ENCODE measurements at regions of chr1 and their contacts with region 1.

Region 1: GRCh38 chr1:109027841-109028240 is 14.1 kb downstream of the WDR47 start:
- DNase-seq: peak; percentile 7 to 39 (median 36)
- H3K4me3 ChIP-seq: no peak overlapping the region
- H3K27ac ChIP-seq: no peak overlapping the region
- H3K4me1 ChIP-seq: peaks cover 0 to 8% (median 3%) of the 10 kb centered on the region in 4 experiments
- H3K27me3 ChIP-seq: no peaks in the 10 kb centered on the region

Region 2: GRCh38 chr1:108913105-108913948 is 114.5 kb before region 1 on chr1:
- CTCF ChIA-PET with region 1: no interaction called
- POLR2A ChIA-PET with region 1: no interaction called
- DNase-seq: peak in 2 of 3 donors; percentile 32 to 40
- H3K4me3 ChIP-seq: no peak overlapping the region
- H3K27ac ChIP-seq: peak overlapping the region in 1 of 2 experiments; percentile 59
- H3K4me1 ChIP-seq: peaks cover 0 to 6% (median 3%) of the 10 kb centered on the region in 4 experiments
- H3K27me3 ChIP-seq: no peaks in the 10 kb centered on the region

Region 3: DNA sequence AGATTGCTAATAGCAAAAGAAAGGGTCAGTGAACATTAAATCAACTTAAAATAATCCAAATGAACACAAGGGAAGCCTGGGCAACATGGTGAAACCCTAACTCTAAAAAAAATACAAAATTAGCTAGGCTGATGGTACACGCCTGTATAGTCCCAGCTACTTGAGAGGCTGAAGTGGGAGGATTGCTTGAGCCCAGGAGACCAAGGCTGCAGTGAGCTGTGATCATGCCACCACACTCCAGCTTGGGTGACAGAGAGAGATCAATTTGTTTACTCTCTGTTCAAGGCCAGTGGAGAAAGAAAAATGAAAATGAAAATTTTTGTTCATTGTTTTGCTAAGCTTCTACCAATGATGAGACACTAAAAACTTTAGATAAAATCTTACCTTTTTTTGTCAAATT is 10.7 kb before region 1 on chr1:
- CTCF ChIA-PET with region 1: interaction called, 15 read pairs
- POLR2A ChIA-PET with region 1: interaction called, 3 read pairs
- DNase-seq: no peak
- H3K4me3 ChIP-seq: no peak overlapping the region
- H3K27ac ChIP-seq: no peak overlapping the region
- H3K4me1 ChIP-seq: no peaks in the 10 kb centered on the region
- H3K27me3 ChIP-seq: no peaks in the 10 kb centered on the region

Region 4: GRCh38 chr1:109041621-109042468 is 14.0 kb after region 1 on chr1 and contains the start of gene WDR47:
- CTCF ChIA-PET with region 1: interaction called, 17 read pairs
- POLR2A ChIA-PET with region 1: interaction called, 3 read pairs
- DNase-seq: peak; percentile 98 to 99 (median 99)
- H3K4me3 ChIP-seq: peak within 1 kb of the TSS; percentile 82 to 97 (median 93)
- H3K27ac ChIP-seq: peak within 1 kb of the TSS; percentile 54 to 83
- H3K4me1 ChIP-seq: peaks cover 5 to 16% (median 12%) of the 10 kb centered on the region in 4 experiments
- H3K27me3 ChIP-seq: no peaks in the 10 kb centered on the region

Region 5: DNA sequence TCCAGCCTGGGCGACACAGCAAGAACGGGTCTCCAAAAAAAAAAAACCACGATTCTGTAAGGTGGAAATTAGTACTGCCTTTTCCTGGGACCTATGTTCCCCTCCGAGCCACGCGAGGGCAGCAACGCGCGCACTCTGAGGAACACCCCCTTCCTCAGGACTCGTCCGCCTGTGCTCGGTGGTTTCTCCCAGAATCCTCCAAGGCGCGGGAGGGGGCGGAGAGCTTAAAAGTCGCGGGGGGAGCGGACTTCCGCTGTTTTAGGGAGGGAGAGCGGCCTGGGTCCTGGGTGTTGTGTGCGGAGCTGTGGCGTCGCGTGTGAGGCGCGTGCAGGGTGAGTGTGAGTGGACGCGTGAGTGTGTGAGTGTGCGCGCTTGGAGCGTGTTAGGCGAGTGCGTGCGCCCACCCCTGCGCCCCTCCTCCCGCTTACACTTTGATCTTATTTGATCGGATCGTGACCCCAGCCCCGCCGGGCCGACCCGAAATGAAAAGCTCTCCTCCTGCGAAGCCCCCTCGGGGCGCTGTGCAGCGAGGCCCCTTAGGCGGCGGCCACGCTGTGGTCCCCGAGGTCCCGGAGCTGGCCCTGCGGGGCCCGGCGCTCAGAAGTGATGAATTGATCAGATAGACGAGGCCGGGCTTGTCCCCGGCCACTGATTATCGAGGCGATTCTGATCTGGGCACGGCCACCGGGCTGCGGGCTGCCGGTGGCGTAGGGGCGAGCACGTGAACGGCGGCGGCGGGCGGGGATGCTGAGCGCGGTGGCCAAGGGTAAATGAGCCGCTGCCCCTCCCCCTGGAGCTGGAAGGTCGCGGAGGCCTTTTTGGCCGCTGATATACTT is 72.3 kb after region 1 on chr1:
- CTCF ChIA-PET with region 1: interaction called, 17 read pairs
- POLR2A ChIA-PET with region 1: interaction called, 3 read pairs
- DNase-seq: peak; percentile 99
- H3K4me3 ChIP-seq: peak overlapping the region; percentile 70 to 89 (median 79)
- H3K27ac ChIP-seq: peak overlapping the region; percentile 74 to 91
- H3K4me1 ChIP-seq: peaks cover 0 to 17% (median 5%) of the 10 kb centered on the region in 4 experiments
- H3K27me3 ChIP-seq: no peaks in the 10 kb centered on the region

Region 6: DNA sequence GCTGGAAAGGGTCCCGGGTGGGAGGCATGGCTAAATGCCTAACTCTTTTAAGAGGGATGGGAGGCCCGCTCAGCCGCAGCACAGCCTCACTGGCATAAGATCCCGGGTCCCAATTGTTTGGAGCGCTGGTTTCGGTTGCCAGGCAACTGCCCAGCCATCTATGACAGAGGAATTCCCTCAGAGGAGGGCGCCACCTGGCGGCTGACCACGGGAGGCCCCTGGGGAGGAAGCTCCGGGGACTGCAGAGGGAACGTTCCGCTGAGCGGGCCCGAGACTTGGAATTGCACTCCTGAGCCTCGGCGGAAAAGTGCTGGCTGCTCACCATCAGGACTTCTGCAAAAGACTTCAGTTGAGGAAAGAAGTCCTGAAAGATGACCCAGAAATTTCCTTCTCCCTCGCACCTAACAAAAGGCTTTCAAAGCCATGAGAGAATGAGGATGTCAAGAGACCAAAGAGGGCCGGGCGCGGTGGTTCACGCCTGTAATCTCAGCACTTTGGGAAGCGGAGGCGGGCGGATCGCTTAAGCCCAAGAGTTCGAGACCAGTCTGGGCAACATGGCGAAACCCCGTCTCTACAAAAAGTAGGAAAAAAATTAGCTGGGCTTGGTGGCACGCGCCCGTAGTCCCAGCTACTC is 84.9 kb after region 1 on chr1:
- CTCF ChIA-PET with region 1: interaction called, 22 read pairs
- POLR2A ChIA-PET with region 1: no interaction called
- DNase-seq: peak; percentile 85 to 89 (median 87)
- H3K4me3 ChIP-seq: peak overlapping the region in 5 of 7 experiments; percentile 16 to 69 (median 39)
- H3K27ac ChIP-seq: no peak overlapping the region
- H3K4me1 ChIP-seq: peaks cover 0 to 24% (median 22%) of the 10 kb centered on the region in 4 experiments
- H3K27me3 ChIP-seq: peaks cover 13 to 74% (median 31%) of the 10 kb centered on the region in 5 experiments